Caco-2 (cell line): ENCODE measurements at regions of chr9 and their contacts with region 1.

Region 1: GRCh38 chr9:94277885-94278536 is 18.9 kb downstream of the ZNF169 start:
- DNase-seq: no peak
- H3K4me3 ChIP-seq: no peak overlapping the region
- H3K4me3 Mint-ChIP-seq: no peak overlapping the region
- H3K27ac Mint-ChIP-seq: peak overlapping the region; percentile 55
- H3K4me1 ChIP-seq: peaks cover 26% of the 10 kb centered on the region
- H3K4me1 Mint-ChIP-seq: peaks cover 11% of the 10 kb centered on the region
- H3K27me3 ChIP-seq: no peaks in the 10 kb centered on the region
- H3K27me3 Mint-ChIP-seq: no peaks in the 10 kb centered on the region
- CTCF ChIP-seq: no peak

Region 2: DNA sequence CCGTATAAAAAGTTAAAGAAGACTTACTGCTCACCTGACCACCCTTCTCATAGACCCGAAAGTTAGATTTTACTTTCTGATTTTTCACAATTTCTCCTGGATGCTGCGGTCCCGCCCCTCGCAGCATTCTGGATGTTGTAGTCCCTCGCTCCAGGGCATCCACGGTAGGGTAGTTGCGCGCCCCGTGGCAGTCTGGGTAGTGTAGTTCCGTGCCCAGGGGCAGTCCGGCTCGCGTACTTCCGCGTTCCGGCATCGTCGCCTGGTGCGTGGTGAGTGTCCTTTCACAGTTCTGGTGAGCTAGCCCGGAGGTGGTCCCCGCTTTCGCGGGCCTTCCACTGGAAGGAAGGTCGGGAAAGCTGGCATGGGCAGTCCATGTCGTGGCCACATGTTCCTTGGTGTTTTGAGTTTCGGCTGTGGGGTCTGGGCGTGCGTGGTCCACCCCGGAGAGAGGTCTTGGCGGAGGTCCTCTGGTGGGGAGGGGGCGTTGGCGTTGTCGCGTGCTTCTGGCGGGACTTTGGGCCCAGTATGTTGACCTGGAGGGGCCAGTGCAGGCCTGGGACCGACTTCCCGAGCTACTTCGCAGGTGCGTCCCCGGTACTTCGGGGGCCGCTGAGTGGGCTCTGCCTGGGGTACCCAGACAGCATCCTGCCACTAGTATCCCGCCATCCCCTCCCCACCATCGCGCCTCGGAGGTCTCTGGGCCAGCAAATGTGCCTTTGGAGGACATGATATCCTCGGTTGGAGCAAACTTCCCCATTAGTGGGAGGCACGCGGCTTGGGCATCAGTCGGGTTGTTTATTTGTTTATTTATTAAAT is 18.7 kb before region 1 on chr9 and contains the start of gene ZNF169:
- CTCF ChIA-PET with region 1: no interaction called
- POLR2A ChIA-PET with region 1: no interaction called
- intact Hi-C with region 1: loop called (anchors 2 kb)
- DNase-seq: peak; percentile 86 to 91
- H3K4me3 ChIP-seq: peak within 1 kb of the TSS; percentile 67
- H3K4me3 Mint-ChIP-seq: peak within 1 kb of the TSS; percentile 96
- H3K27ac Mint-ChIP-seq: peak within 1 kb of the TSS; percentile 98
- H3K4me1 ChIP-seq: no peaks in the 10 kb centered on the region
- H3K4me1 Mint-ChIP-seq: no peaks in the 10 kb centered on the region
- H3K27me3 ChIP-seq: no peaks in the 10 kb centered on the region
- H3K27me3 Mint-ChIP-seq: no peaks in the 10 kb centered on the region
- CTCF ChIP-seq: no peak
- total RNA-seq, gene ZNF169: 3.3 and 3.7 TPM in 2 replicates

Region 3: GRCh38 chr9:94300548-94301301 is 22.7 kb after region 1 on chr9:
- CTCF ChIA-PET with region 1: no interaction called
- POLR2A ChIA-PET with region 1: no interaction called
- intact Hi-C with region 1: loop called (anchors 2 kb)
- DNase-seq: peak in 1 of 2 experiments; percentile 54
- H3K4me3 ChIP-seq: no peak overlapping the region
- H3K4me3 Mint-ChIP-seq: no peak overlapping the region
- H3K27ac Mint-ChIP-seq: no peak overlapping the region
- H3K4me1 ChIP-seq: no peaks in the 10 kb centered on the region
- H3K4me1 Mint-ChIP-seq: no peaks in the 10 kb centered on the region
- H3K27me3 ChIP-seq: no peaks in the 10 kb centered on the region
- H3K27me3 Mint-ChIP-seq: no peaks in the 10 kb centered on the region
- CTCF ChIP-seq: no peak